ENCODE measurements at regions of chr7 and their contacts with region 1.

Region 1: DNA sequence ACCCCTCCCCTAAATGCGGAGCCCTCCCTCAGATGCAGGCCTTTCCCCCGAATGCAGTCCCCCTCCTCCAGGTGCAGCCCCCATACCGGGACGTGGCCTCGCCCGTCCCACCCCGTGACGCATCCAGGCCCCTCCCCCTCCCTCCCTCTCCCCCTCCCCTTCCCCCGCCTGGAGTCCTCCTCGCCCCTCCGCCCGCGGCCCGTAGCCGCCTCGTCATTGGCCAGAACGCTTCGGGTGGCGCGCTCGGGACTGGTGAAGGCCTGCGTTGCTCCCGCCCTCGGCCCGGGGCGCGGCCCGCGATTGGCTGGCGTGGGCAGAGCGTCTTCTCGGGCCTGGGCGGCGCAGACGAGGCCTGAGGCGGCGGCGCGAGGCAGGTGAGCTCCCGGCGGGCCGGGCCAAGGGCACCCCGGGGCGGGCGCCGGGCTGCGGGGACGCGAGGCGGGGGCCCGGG is 16.0 kb upstream of the SUN1 start:
- DNase-seq: peak; percentile 94 to 100
- H3K4me3 ChIP-seq: peak overlapping the region; percentile 64
- H3K27ac ChIP-seq: no peak overlapping the region
- H3K4me1 ChIP-seq: peaks cover 38% of the 10 kb centered on the region
- H3K27me3 ChIP-seq: no peaks in the 10 kb centered on the region
- CTCF ChIP-seq: no peak

Region 2: GRCh38 chr7:357531-358209 is 458.7 kb before region 1 on chr7:
- CTCF ChIA-PET with region 1: no interaction called
- POLR2A ChIA-PET with region 1: interaction called, 17 read pairs
- intact Hi-C with region 1: no loop called
- DNase-seq: no peak
- H3K4me3 ChIP-seq: no peak overlapping the region
- H3K27ac ChIP-seq: no peak overlapping the region
- H3K4me1 ChIP-seq: no peaks in the 10 kb centered on the region
- H3K27me3 ChIP-seq: peaks cover 93% of the 10 kb centered on the region
- CTCF ChIP-seq: no peak

Region 3: DNA sequence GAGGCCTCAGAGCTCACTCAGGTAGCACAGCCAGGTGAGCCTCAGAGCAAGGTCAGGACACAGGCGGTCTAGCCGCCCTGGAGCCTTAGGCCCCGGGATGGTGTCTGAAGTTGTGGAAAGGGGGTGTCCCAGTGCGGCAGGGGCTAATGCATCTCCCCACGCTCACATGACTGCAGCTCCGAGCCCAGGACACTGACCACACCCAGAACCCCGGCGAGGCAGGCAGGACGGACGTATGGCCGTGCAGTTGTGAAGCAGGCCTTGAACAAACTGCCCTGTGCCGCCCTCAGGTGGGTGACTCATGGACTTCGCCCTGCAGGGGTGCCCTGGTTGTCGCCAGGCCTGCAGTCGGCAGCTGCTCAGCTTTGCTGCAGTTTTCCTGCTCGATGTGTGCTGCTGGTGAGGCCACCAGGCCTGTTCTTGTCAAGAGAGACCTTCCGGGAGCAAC is 84.2 kb before region 1 on chr7:
- CTCF ChIA-PET with region 1: no interaction called
- POLR2A ChIA-PET with region 1: interaction called, 10 read pairs
- intact Hi-C with region 1: no loop called
- DNase-seq: peak; percentile 83 to 87
- H3K4me3 ChIP-seq: no peak overlapping the region
- H3K27ac ChIP-seq: peak overlapping the region; percentile 35; the same call in 1 of the 2 replicates
- H3K4me1 ChIP-seq: peaks cover 23% of the 10 kb centered on the region
- H3K27me3 ChIP-seq: no peaks in the 10 kb centered on the region
- CTCF ChIP-seq: peak; percentile 48; the same call in 1 of the 2 replicates

Region 4: GRCh38 chr7:801940-802381 is 14.4 kb before region 1 on chr7:
- CTCF ChIA-PET with region 1: interaction called, 19 read pairs
- POLR2A ChIA-PET with region 1: no interaction called
- intact Hi-C with region 1: no loop called
- DNase-seq: peak in 1 of 2 experiments; percentile 66
- H3K4me3 ChIP-seq: no peak overlapping the region
- H3K27ac ChIP-seq: no peak overlapping the region
- H3K4me1 ChIP-seq: no peaks in the 10 kb centered on the region
- H3K27me3 ChIP-seq: no peaks in the 10 kb centered on the region
- CTCF ChIP-seq: no peak

Region 5: DNA sequence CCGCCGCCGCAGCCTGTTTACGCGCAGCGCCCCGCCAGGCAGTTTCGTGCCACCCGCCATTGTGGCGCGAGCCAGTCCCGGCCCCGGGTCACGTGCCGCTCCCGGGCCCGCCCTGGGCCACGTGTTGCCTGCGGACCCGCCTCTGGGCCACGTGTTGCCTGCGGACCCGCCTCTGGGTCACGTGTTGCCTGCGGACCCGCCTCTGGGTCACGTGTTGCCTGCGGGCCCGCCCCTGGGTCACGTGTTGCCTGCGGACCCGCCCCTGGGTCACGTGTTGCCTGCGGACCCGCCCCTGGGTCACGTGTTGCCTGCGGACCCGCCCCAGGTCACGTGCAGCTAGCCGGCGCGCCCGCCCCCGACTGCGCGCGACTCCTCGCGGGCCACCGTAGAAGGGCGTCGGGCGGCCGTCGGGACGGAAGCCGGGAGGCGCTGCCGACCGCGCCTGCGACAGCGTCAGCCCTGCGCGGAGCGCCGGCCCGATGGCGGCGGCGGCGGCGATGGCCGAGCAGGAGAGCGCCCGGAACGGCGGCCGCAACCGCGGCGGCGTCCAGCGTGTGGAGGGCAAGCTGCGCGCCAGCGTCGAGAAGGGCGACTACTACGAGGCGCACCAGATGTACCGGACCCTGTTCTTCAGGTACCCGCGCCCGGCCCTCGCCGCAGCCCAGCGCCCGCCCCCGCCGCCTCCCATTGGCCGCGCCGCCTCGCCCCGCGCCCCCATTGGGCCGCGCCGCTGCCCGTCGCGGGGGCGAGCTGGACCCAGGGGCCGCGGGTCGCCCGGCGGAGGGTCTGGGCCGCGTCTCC is 60.0 kb after region 1 on chr7 and contains the start of gene GET4:
- CTCF ChIA-PET with region 1: interaction called, 5 read pairs
- POLR2A ChIA-PET with region 1: interaction called, 3 read pairs
- intact Hi-C with region 1: loop called (anchors 2 kb)
- DNase-seq: peak; percentile 76 to 99
- H3K4me3 ChIP-seq: peak within 1 kb of the TSS; percentile 67
- H3K27ac ChIP-seq: peak within 1 kb of the TSS; percentile 49
- H3K4me1 ChIP-seq: peaks cover 20% of the 10 kb centered on the region
- H3K27me3 ChIP-seq: no peaks in the 10 kb centered on the region
- CTCF ChIP-seq: no peak
- total RNA-seq, gene GET4: 120 and 166 TPM in 2 replicates

Region 6: GRCh38 chr7:936131-937054 is 120.1 kb after region 1 on chr7:
- CTCF ChIA-PET with region 1: no interaction called
- POLR2A ChIA-PET with region 1: no interaction called
- intact Hi-C with region 1: no loop called
- DNase-seq: peak; percentile 95 to 96
- H3K4me3 ChIP-seq: peak overlapping the region; percentile 45; the same call in 1 of the 2 replicates
- H3K27ac ChIP-seq: peak overlapping the region; percentile 89
- H3K4me1 ChIP-seq: peaks cover 13% of the 10 kb centered on the region
- H3K27me3 ChIP-seq: no peaks in the 10 kb centered on the region
- CTCF ChIP-seq: no peak

Region 7: GRCh38 chr7:974820-975681 is 158.7 kb after region 1 on chr7 and contains the start of gene COX19:
- CTCF ChIA-PET with region 1: no interaction called
- POLR2A ChIA-PET with region 1: interaction called, 16 read pairs
- intact Hi-C with region 1: no loop called
- DNase-seq: peak; percentile 70 to 93
- H3K4me3 ChIP-seq: peak within 1 kb of the TSS; percentile 84
- H3K27ac ChIP-seq: peak within 1 kb of the TSS; percentile 79
- H3K4me1 ChIP-seq: peaks cover 18% of the 10 kb centered on the region; the same call in 1 of the 2 replicates
- H3K27me3 ChIP-seq: no peaks in the 10 kb centered on the region
- CTCF ChIP-seq: no peak
- total RNA-seq, gene COX19: 28.9 and 29.3 TPM in 2 replicates